Activated CD4-positive, alpha-beta memory T cell treated with anti-CD3 and anti-CD28 coated beads for 36 hours (primary cell): ENCODE measurements at regions of chr1 and their contacts with region 1.

Region 1: DNA sequence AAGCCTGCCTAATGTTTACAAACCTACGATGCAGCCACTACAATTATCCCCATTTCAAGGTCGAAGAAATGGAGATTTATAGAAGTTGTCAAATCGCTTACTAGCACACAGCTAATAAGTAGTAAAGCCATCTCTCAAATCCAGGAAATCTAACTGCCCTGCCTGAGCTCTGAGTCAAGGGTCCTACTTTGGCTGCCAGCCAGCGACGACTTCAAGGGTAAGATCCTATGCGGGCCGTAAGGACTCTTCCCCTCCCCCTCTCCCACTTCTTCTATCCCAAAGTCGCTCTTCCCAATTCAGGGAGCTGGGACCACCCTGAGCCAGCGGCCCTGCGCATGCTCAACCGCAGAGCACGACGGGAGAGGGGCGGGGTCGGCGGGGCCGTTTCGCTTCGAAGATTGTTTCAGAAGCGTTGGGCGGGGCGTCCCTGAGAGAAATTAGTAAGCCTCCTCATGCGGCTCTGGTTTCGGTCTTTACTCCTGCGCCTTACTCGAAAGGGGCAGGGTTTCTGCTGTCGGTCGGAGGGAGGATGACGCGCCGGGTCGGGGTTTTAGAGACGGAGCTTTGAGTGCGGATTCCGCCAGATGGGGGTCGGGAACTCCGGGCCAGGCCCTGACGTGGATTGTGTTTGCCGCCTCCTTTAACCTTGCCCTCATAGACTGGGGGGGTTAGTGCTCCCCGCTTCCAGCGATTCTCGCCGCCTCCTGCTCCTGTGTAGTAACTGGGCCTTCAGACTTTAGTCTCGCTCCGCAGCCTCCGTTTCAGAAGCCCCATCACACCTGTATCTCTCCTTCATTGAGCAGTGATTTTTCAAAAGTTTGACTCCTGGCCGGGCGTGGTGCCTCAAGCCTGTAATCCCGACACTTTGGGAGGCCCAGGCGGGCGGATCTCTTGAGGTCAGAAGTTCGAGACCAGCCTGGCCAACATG is at the start of gene ZMYM1:
- DNase-seq: peak; percentile 95
- H3K4me3 Mint-ChIP-seq: peak within 1 kb of the TSS; percentile 94
- H3K27ac Mint-ChIP-seq: peak within 1 kb of the TSS; percentile 98
- H3K4me1 Mint-ChIP-seq: peaks cover 35% of the 10 kb centered on the region
- H3K27me3 Mint-ChIP-seq: no peaks in the 10 kb centered on the region
- total RNA-seq, gene ZMYM1: 3.6 to 3.9 TPM

Region 2: DNA sequence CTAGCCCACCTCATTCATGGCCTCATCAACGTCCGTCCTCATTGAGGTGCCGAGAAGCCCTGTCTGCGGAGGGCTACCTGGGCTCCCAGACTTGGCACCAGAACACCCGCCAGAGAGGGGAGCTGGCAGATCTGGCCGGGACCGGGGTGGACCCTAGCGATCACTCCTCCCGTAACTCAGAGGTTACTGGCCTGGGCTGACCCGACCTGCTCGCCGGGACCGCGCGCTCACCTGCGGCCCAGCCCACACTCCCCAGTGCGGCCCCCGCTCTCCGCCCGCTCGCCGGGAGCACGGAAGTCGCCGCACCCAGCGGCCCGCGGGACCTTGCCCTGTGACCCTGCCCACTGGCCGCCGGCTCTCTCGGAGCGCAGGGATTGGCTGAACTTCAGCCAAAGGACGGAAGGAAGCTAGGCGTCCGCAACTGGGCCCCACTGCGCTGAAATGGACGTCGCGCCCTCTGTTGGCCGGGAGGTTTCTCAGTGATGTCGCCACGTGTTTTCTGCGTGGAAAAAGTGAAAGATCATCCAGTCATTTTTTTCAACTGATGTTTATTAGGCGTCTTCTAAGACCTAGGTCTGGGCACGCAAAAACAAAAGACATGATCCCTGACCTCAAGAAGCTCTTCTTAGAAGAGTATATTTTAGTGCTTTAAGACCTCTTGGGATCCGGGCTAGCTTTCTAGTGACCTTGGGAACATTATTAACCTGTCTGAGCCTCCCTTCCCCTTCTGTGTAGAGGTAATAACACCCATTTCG is 219.6 kb before region 1 on chr1 and contains the start of gene SMIM12:
- CTCF ChIA-PET with region 1: no interaction called
- POLR2A ChIA-PET with region 1: interaction called, 8 read pairs
- intact Hi-C with region 1: loop called (anchors 2 kb)
- DNase-seq: peak; percentile 96
- H3K4me3 Mint-ChIP-seq: peak within 1 kb of the TSS; percentile 98
- H3K27ac Mint-ChIP-seq: peak within 1 kb of the TSS; percentile 98
- H3K4me1 Mint-ChIP-seq: peaks cover 42% of the 10 kb centered on the region
- H3K27me3 Mint-ChIP-seq: no peaks in the 10 kb centered on the region
- total RNA-seq, gene SMIM12: 46.5 to 46.7 TPM

Region 3: GRCh38 chr1:34896613-34897012 is 182.7 kb before region 1 on chr1:
- CTCF ChIA-PET with region 1: no interaction called
- POLR2A ChIA-PET with region 1: no interaction called
- intact Hi-C with region 1: no loop called
- DNase-seq: no peak
- H3K4me3 Mint-ChIP-seq: no peak overlapping the region
- H3K27ac Mint-ChIP-seq: no peak overlapping the region
- H3K4me1 Mint-ChIP-seq: no peaks in the 10 kb centered on the region
- H3K27me3 Mint-ChIP-seq: peaks cover 13% of the 10 kb centered on the region

Region 4: GRCh38 chr1:35298464-35298863 is 219.2 kb after region 1 on chr1:
- CTCF ChIA-PET with region 1: no interaction called
- POLR2A ChIA-PET with region 1: no interaction called
- intact Hi-C with region 1: no loop called
- DNase-seq: peak; percentile 19
- H3K4me3 Mint-ChIP-seq: no peak overlapping the region
- H3K27ac Mint-ChIP-seq: no peak overlapping the region
- H3K4me1 Mint-ChIP-seq: peaks cover 4% of the 10 kb centered on the region
- H3K27me3 Mint-ChIP-seq: no peaks in the 10 kb centered on the region